Body of pancreas (tissue), 4 donors: ENCODE measurements at regions of chr6 and their contacts with region 1.

Region 1: GRCh38 chr6:75208298-75209183 is 2.7 kb upstream of the COL12A1 start:
- DNase-seq: peak; percentile 81 to 87 (median 86)
- ATAC-seq: peak; percentile 73
- H3K4me3 ChIP-seq: no peak overlapping the region
- H3K27ac ChIP-seq: no peak overlapping the region
- H3K4me1 ChIP-seq: peaks cover 40% of the 10 kb centered on the region
- H3K27me3 ChIP-seq: peaks cover 0 to 37% of the 10 kb centered on the region in 2 donors
- CTCF ChIP-seq: peak; percentile 58 to 91 (median 86)
- POLR2A ChIP-seq: no peak

Region 2: GRCh38 chr6:73743556-73743955 is 1465.0 kb before region 1 on chr6:
- intact Hi-C with region 1: loop called (anchors 5 kb)
- DNase-seq: no peak
- ATAC-seq: no peak
- H3K4me3 ChIP-seq: no peak overlapping the region
- H3K27ac ChIP-seq: no peak overlapping the region
- H3K4me1 ChIP-seq: no peaks in the 10 kb centered on the region
- H3K27me3 ChIP-seq: no peaks in the 10 kb centered on the region
- CTCF ChIP-seq: no peak
- POLR2A ChIP-seq: no peak

Region 3: GRCh38 chr6:74091136-74091793 is 1117.3 kb before region 1 on chr6:
- intact Hi-C with region 1: loop called (anchors 10 kb)
- DNase-seq: no peak
- ATAC-seq: peak; percentile 48
- H3K4me3 ChIP-seq: no peak overlapping the region
- H3K27ac ChIP-seq: no peak overlapping the region
- H3K4me1 ChIP-seq: no peaks in the 10 kb centered on the region
- H3K27me3 ChIP-seq: no peaks in the 10 kb centered on the region
- CTCF ChIP-seq: peak; percentile 48 to 67 (median 59)
- POLR2A ChIP-seq: no peak

Region 4: GRCh38 chr6:74410630-74411029 is 797.9 kb before region 1 on chr6:
- intact Hi-C with region 1: loop called (anchors 10 kb)
- DNase-seq: no peak
- ATAC-seq: no peak
- H3K4me3 ChIP-seq: no peak overlapping the region
- H3K27ac ChIP-seq: no peak overlapping the region
- H3K4me1 ChIP-seq: no peaks in the 10 kb centered on the region
- H3K27me3 ChIP-seq: no peaks in the 10 kb centered on the region
- CTCF ChIP-seq: no peak
- POLR2A ChIP-seq: no peak